H1 (cell line): ENCODE measurements at regions of chr12 and their contacts with region 1.

Region 1: DNA sequence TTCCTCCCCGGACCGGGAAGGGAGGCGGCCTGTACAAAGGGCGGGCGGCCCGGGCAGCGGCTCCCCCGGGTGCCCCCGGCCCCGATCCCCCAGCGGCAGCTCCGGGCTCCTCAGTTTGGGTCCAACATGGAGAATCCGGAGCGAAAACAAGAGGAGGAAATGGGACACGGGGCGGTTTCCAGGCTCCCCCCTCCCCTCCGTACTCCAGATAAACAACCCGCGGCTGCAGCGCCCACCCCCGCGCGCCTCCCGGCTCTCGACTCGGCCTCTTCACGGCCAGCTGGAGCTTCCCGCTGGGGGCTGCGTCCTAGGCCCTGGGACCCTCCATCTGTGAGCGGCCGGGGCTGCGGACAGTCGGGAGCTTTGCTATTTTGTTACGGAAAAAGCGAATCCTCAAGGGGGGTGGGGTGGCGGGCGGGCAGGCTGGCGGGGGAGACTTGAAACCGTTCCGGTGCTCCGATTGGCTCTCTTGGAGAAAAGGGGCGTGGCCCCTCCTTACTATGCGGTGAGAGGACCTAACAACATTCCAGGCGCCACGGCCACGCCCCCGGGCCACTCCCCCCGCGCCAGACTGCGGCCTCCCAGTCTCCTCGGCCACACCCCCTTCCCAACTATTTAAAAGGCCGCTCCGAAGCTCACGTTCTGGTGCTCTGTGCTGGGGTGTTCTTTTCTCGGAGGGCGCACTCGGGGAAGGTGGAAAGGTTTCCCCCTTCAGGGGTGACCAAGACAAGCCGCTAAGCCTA is at the start of gene CTDSP2:
- DNase-seq: peak; percentile 95 to 100
- H3K4me3 ChIP-seq: peak within 1 kb of the TSS; percentile 86 to 98 (median 94)
- H3K27ac ChIP-seq: peak within 1 kb of the TSS; percentile 99
- H3K4me1 ChIP-seq: peaks cover 6 to 35% (median 21%) of the 10 kb centered on the region in 4 experiments
- H3K27me3 ChIP-seq: peaks cover 0 to 3% (median under 1%) of the 10 kb centered on the region in 4 experiments; a peak in 2 of 7 replicates
- CTCF ChIP-seq: no peak
- EP300 ChIP-seq: no peak; a peak in 1 of 3 replicates
- POLR2A ChIP-seq: peak; percentile 69 to 70
- RAD21 ChIP-seq: peak; percentile 11; a peak in 1 of 4 replicates
- total RNA-seq, gene CTDSP2: 91.7 and 93.7 TPM in 2 replicates

Region 2: GRCh38 chr12:57771708-57772428 is 74.9 kb before region 1 on chr12 and contains the start of gene METTL1:
- CTCF ChIA-PET with region 1: interaction called, 3 read pairs
- POLR2A ChIA-PET with region 1: interaction called, 11 read pairs
- DNase-seq: peak; percentile 91 to 96
- H3K4me3 ChIP-seq: peak within 1 kb of the TSS; percentile 79 to 99 (median 95)
- H3K27ac ChIP-seq: peak within 1 kb of the TSS; percentile 99
- H3K4me1 ChIP-seq: peaks cover 3 to 10% (median 5%) of the 10 kb centered on the region in 4 experiments; a peak in 5 of 7 replicates
- H3K27me3 ChIP-seq: peaks cover 0 to 7% (median 3%) of the 10 kb centered on the region in 4 experiments; a peak in 4 of 7 replicates
- CTCF ChIP-seq: peak in 1 of 3 experiments; percentile 1; a peak in 1 of 4 replicates
- EP300 ChIP-seq: 0 out of 3 replicates have a peak, but pooled peaks of 1 of the 2 experiments have one; percentile 66
- POLR2A ChIP-seq: peak in 1 of 2 experiments; percentile 98; a peak in 2 of 3 replicates
- RAD21 ChIP-seq: no peak
- total RNA-seq, gene METTL1: 41.9 and 46.0 TPM in 2 replicates

Region 3: GRCh38 chr12:57822392-57823130 is 24.2 kb before region 1 on chr12:
- CTCF ChIA-PET with region 1: interaction called, 7 read pairs
- POLR2A ChIA-PET with region 1: interaction called, 37 read pairs
- DNase-seq: no peak
- H3K4me3 ChIP-seq: no peak overlapping the region
- H3K27ac ChIP-seq: no peak overlapping the region
- H3K4me1 ChIP-seq: no peaks in the 10 kb centered on the region
- H3K27me3 ChIP-seq: no peaks in the 10 kb centered on the region
- CTCF ChIP-seq: no peak
- EP300 ChIP-seq: no peak
- POLR2A ChIP-seq: no peak
- RAD21 ChIP-seq: no peak

Region 4: GRCh38 chr12:57836442-57837375 is 10.0 kb before region 1 on chr12:
- CTCF ChIA-PET with region 1: interaction called, 44 read pairs
- POLR2A ChIA-PET with region 1: interaction called, 722 read pairs
- DNase-seq: no peak
- H3K4me3 ChIP-seq: peak overlapping the region in 3 of 4 experiments; percentile 0 to 31 (median 14); a peak in 3 of 8 replicates
- H3K27ac ChIP-seq: peak overlapping the region; percentile 55; the same call in 1 of the 2 replicates
- H3K4me1 ChIP-seq: peaks cover 37 to 69% (median 45%) of the 10 kb centered on the region in 4 experiments
- H3K27me3 ChIP-seq: no peaks in the 10 kb centered on the region
- CTCF ChIP-seq: no peak
- EP300 ChIP-seq: peak in 1 of 2 experiments; percentile 30; a peak in 1 of 3 replicates
- POLR2A ChIP-seq: no peak; a peak in 1 of 3 replicates
- RAD21 ChIP-seq: no peak

Region 5: GRCh38 chr12:57881475-57881874 is 34.7 kb after region 1 on chr12:
- CTCF ChIA-PET with region 1: interaction called, 5 read pairs
- POLR2A ChIA-PET with region 1: interaction called, 12 read pairs
- DNase-seq: no peak
- H3K4me3 ChIP-seq: no peak overlapping the region
- H3K27ac ChIP-seq: no peak overlapping the region
- H3K4me1 ChIP-seq: no peaks in the 10 kb centered on the region
- H3K27me3 ChIP-seq: no peaks in the 10 kb centered on the region
- CTCF ChIP-seq: no peak
- EP300 ChIP-seq: no peak
- POLR2A ChIP-seq: no peak
- RAD21 ChIP-seq: no peak

Region 6: GRCh38 chr12:57899010-57899662 is 52.4 kb after region 1 on chr12:
- CTCF ChIA-PET with region 1: interaction called, 49 read pairs
- POLR2A ChIA-PET with region 1: interaction called, 181 read pairs
- DNase-seq: no peak
- H3K4me3 ChIP-seq: no peak overlapping the region
- H3K27ac ChIP-seq: no peak overlapping the region
- H3K4me1 ChIP-seq: peaks cover 9 to 20% (median 13%) of the 10 kb centered on the region in 4 experiments
- H3K27me3 ChIP-seq: peaks cover 0 to 10% (median 8%) of the 10 kb centered on the region in 4 experiments; a peak in 4 of 7 replicates
- CTCF ChIP-seq: no peak
- EP300 ChIP-seq: no peak
- POLR2A ChIP-seq: no peak
- RAD21 ChIP-seq: no peak